Right lobe of liver (tissue), 6 donors: ENCODE measurements at regions of chr3 and their contacts with region 1.

Region 1: GRCh38 chr3:21517184-21517583 is 233.8 kb downstream of the ZNF385D start:
- DNase-seq: no peak
- ATAC-seq: no peak
- H3K4me3 ChIP-seq: no peak overlapping the region
- H3K27ac ChIP-seq: no peak overlapping the region
- H3K4me1 ChIP-seq: no peaks in the 10 kb centered on the region
- H3K27me3 ChIP-seq: no peaks in the 10 kb centered on the region
- CTCF ChIP-seq: no peak
- POLR2A ChIP-seq: no peak

Region 2: DNA sequence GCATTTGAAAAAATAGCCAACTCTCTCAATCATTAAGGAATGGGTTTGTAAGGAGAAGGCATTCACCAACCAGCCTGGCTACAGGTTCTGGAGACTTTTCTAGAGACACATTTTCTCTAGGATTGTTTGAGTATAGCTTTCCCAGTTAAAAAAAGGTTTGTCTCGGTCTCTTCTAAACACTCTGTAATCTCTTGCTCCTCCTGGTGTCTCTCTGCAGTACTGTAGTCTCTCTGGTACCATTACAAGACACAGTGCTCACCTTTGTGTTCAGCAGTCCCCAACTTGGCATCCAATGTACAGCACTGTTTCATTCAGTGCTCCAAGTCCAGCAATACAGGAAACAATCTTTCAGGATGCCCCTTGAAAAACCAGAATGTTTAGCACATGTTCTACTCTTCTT is 300.6 kb before region 1 on chr3:
- intact Hi-C with region 1: no loop called
- DNase-seq: no peak
- ATAC-seq: peak in 1 of 4 donors; percentile 33
- H3K4me3 ChIP-seq: no peak overlapping the region
- H3K27ac ChIP-seq: no peak overlapping the region
- H3K4me1 ChIP-seq: no peaks in the 10 kb centered on the region
- H3K27me3 ChIP-seq: no peaks in the 10 kb centered on the region
- CTCF ChIP-seq: peak in 3 of 4 donors; percentile 15 to 27 (median 18)
- POLR2A ChIP-seq: no peak

Region 3: DNA sequence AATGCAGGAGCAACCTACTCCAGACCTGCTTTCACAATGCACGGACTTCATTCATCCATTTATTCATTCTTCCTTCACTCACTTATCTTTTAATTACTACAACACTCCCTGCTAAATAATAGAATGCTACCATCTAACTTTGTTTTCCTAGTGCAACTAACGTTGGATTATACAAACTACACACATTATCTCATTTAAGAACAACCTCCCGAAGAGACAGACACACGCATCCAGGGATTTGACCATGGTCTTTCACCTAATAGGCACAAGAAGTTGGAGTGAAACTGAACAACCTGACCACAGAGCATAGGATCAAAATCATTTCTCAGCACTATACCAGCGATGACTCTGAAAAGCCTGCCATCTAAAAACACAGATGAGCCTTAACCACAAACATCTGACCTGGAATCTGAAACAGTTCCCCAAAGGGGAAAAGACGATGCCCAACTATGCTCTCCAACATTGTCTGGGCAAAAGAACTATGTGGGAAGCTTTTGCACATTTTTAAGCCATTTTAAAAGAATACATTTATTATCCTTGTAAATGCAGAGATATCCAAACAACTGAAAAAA is 212.8 kb after region 1 on chr3:
- intact Hi-C with region 1: loop called in 1 of 2 experiments (anchors 5 kb)
- DNase-seq: no peak
- ATAC-seq: no peak
- H3K4me3 ChIP-seq: no peak overlapping the region
- H3K27ac ChIP-seq: no peak overlapping the region
- H3K4me1 ChIP-seq: no peaks in the 10 kb centered on the region
- H3K27me3 ChIP-seq: no peaks in the 10 kb centered on the region
- CTCF ChIP-seq: no peak
- POLR2A ChIP-seq: no peak

Region 4: GRCh38 chr3:21920421-21920861 is 403.3 kb after region 1 on chr3:
- intact Hi-C with region 1: no loop called
- DNase-seq: no peak
- ATAC-seq: no peak
- H3K4me3 ChIP-seq: no peak overlapping the region
- H3K27ac ChIP-seq: no peak overlapping the region
- H3K4me1 ChIP-seq: no peaks in the 10 kb centered on the region
- H3K27me3 ChIP-seq: no peaks in the 10 kb centered on the region
- CTCF ChIP-seq: no peak
- POLR2A ChIP-seq: no peak